Ascending aorta (tissue), 2 donors: ENCODE measurements at regions of chr15 and their contacts with region 1.

Region 1: GRCh38 chr15:32844118-32844711 is 126.4 kb downstream of the GREM1 start:
- DNase-seq: no peak
- H3K4me3 ChIP-seq: no peak overlapping the region
- H3K27ac ChIP-seq: no peak overlapping the region
- H3K4me1 ChIP-seq: no peaks in the 10 kb centered on the region
- H3K27me3 ChIP-seq: no peaks in the 10 kb centered on the region
- CTCF ChIP-seq: peak; percentile 27 to 67 (median 57)

Region 2: DNA sequence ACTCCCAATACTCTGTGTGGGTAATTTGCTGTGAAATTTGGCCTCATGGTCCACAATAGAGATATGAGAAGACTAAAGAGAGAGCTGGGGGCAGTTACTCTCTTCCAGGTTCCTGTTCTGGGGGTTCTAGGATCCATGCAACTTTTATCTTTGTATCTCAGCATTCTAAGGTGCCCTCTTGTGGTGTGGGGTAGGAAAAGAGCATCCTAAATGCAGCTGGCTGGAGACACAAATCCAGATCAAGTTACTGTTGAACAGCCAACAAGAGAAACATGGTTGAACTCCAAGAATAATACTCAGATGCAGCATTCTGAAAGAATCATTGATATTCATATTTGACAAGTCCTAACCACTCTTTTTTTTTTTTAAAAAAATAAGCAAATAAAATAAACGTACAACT is 111.8 kb after region 1 on chr15:
- intact Hi-C with region 1: loop called (anchors 2 kb)
- DNase-seq: no peak
- H3K4me3 ChIP-seq: no peak overlapping the region
- H3K27ac ChIP-seq: no peak overlapping the region
- H3K4me1 ChIP-seq: no peaks in the 10 kb centered on the region
- H3K27me3 ChIP-seq: no peaks in the 10 kb centered on the region
- CTCF ChIP-seq: peak; percentile 12 to 52 (median 32)

Region 3: DNA sequence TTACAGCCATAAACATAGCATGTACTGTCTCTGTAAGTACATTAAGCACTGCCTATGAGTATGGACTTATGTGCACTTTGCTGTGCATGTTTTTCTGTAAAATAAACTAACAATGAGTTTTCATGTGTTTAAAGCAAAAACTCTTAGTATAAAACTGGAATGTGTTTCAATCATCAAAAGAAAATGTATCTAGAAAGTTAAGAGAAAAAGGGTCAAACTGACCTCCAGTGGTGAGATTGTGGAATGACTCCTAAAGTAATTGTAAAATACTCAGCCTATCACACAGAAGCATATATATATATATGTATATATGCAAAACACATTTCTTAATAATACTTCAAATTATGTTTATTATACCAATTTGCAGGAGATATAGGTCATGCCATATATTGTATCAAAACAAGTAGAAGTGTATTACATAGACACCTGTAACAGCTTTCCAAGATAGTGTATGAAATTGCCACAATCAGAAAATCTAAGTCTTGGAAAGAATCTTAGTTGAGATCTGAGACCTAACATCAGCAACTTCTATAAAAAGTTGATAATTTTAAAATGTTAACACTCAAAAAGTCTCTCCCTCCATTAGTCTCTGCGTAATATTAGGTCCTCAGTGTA is 150.7 kb after region 1 on chr15:
- intact Hi-C with region 1: loop called (anchors 5 kb)
- DNase-seq: no peak
- H3K4me3 ChIP-seq: no peak overlapping the region
- H3K27ac ChIP-seq: no peak overlapping the region
- H3K4me1 ChIP-seq: no peaks in the 10 kb centered on the region
- H3K27me3 ChIP-seq: no peaks in the 10 kb centered on the region
- CTCF ChIP-seq: peak in 2 of 3 experiments; percentile 47 to 63

Region 4: DNA sequence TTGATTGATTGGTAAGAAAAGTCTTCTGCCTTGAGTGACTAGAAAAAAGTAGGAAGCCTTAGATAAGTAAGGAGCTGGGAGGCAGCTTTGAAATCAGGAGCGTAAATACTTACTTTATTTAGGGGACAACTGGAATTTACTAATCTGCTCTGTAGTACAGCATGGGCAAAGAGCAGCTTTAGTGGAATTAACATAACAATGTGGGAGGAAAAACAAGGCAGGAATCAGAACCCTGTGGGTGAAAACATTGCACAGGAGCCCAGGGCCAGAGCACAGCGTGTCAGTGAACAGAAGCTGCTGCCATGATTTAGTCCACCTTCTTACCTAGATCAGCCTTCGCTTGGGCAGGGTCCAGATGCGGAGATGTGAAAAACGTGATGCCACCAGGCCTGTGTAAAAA is 335.7 kb after region 1 on chr15:
- intact Hi-C with region 1: no loop called
- DNase-seq: no peak
- H3K4me3 ChIP-seq: no peak overlapping the region
- H3K27ac ChIP-seq: no peak overlapping the region
- H3K4me1 ChIP-seq: no peaks in the 10 kb centered on the region
- H3K27me3 ChIP-seq: no peaks in the 10 kb centered on the region
- CTCF ChIP-seq: no peak